Activated CD4-positive, alpha-beta T cell treated with anti-CD3 and anti-CD28 coated beads, Interleukin-2, amount 10 ng/mL, durations not matched to agents 24 days and 14 days (primary cell): ENCODE measurements at regions of chr7 and their contacts with region 1.

Region 1: GRCh38 chr7:91618776-91619765 is 261.4 kb downstream of the MTERF1 start:
- DNase-seq: no peak
- H3K4me3 Mint-ChIP-seq: no peak overlapping the region
- H3K27ac Mint-ChIP-seq: no peak overlapping the region
- H3K4me1 Mint-ChIP-seq: no peaks in the 10 kb centered on the region
- H3K27me3 Mint-ChIP-seq: no peaks in the 10 kb centered on the region

Region 2: DNA sequence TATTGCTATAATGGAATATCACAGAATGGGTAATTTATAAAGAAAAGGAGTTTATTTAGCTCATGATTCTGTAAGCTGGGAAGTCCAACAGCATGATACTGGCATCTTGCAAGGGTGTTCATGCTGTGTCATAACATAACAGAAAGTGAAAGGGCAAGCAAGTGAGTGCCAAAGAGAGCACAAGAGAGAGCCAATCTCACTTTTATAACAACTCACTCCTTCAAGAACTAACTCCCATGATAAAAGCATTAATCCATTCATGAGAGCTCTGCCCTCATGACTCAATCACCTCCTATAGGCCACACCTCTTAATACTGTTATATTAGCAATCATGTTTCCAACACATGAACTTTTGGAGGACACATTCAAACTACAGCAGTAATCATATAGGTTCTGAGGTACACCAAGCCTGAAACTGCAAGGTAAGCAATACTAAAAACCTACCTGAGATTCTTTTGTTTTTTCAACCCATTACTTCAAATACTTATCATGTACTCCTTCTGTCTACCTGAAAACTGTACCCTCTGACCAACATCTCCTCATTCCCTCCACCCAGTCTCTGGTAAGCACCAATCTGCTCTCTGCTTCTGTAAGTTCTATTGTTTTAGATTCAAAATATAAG is 41.8 kb after region 1 on chr7:
- intact Hi-C with region 1: loop called (anchors 10 kb)
- DNase-seq: no peak
- H3K4me3 Mint-ChIP-seq: no peak overlapping the region
- H3K27ac Mint-ChIP-seq: no peak overlapping the region
- H3K4me1 Mint-ChIP-seq: peaks cover 4% of the 10 kb centered on the region
- H3K27me3 Mint-ChIP-seq: no peaks in the 10 kb centered on the region